CD4-positive, alpha-beta T cell (primary cell): ENCODE measurements at regions of chr2 and their contacts with region 1.

Region 1: GRCh38 chr2:2719015-2719414 is 387.9 kb upstream of the MYT1L start:
- DNase-seq: no peak
- ATAC-seq: no peak
- H3K4me3 ChIP-seq: no peak overlapping the region
- H3K4me3 Mint-ChIP-seq: no peak overlapping the region
- H3K27ac ChIP-seq: no peak overlapping the region
- H3K27ac Mint-ChIP-seq: no peak overlapping the region
- H3K4me1 ChIP-seq: no peaks in the 10 kb centered on the region
- H3K4me1 Mint-ChIP-seq: no peaks in the 10 kb centered on the region
- H3K27me3 ChIP-seq: peaks cover 0 to 4% of the 10 kb centered on the region in 2 experiments
- H3K27me3 Mint-ChIP-seq: peaks cover 6% of the 10 kb centered on the region
- CTCF ChIP-seq: no peak

Region 2: DNA sequence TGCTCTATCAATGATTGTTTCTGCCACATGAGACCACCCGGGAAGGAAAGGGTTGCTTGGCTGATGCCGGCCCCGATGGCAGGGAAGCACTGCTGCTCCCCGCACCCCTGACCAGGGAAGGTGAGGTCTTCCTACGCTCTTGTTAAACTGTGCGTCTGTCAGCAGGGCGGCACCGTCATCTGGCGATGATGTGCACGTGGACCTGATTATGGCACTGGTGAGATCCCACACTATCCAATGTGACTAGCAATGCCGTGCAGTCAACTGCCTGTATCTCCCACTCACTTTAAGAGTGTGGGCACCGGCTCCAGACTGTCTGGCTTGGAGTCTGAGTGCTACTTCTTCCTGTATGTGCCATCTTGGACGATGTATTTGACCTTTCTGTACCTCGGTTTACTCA is 597.1 kb before region 1 on chr2:
- CTCF ChIA-PET with region 1: no interaction called
- POLR2A ChIA-PET with region 1: no interaction called
- intact Hi-C with region 1: loop called (anchors 5 to 10 kb)
- DNase-seq: no peak
- ATAC-seq: no peak
- H3K4me3 ChIP-seq: no peak overlapping the region
- H3K4me3 Mint-ChIP-seq: no peak overlapping the region
- H3K27ac ChIP-seq: no peak overlapping the region
- H3K27ac Mint-ChIP-seq: no peak overlapping the region
- H3K4me1 ChIP-seq: peaks cover 4% of the 10 kb centered on the region
- H3K4me1 Mint-ChIP-seq: no peaks in the 10 kb centered on the region
- H3K27me3 ChIP-seq: peaks cover 0 to 3% of the 10 kb centered on the region in 2 experiments
- H3K27me3 Mint-ChIP-seq: peaks cover 12% of the 10 kb centered on the region
- CTCF ChIP-seq: no peak

Region 3: GRCh38 chr2:2127467-2127866 is 591.5 kb before region 1 on chr2:
- CTCF ChIA-PET with region 1: no interaction called
- POLR2A ChIA-PET with region 1: no interaction called
- intact Hi-C with region 1: loop called (anchors 5 to 10 kb)
- DNase-seq: no peak
- ATAC-seq: no peak
- H3K4me3 ChIP-seq: no peak overlapping the region
- H3K4me3 Mint-ChIP-seq: no peak overlapping the region
- H3K27ac ChIP-seq: no peak overlapping the region
- H3K27ac Mint-ChIP-seq: no peak overlapping the region
- H3K4me1 ChIP-seq: no peaks in the 10 kb centered on the region
- H3K4me1 Mint-ChIP-seq: no peaks in the 10 kb centered on the region
- H3K27me3 ChIP-seq: no peaks in the 10 kb centered on the region
- H3K27me3 Mint-ChIP-seq: peaks cover 17% of the 10 kb centered on the region
- CTCF ChIP-seq: no peak

Region 4: DNA sequence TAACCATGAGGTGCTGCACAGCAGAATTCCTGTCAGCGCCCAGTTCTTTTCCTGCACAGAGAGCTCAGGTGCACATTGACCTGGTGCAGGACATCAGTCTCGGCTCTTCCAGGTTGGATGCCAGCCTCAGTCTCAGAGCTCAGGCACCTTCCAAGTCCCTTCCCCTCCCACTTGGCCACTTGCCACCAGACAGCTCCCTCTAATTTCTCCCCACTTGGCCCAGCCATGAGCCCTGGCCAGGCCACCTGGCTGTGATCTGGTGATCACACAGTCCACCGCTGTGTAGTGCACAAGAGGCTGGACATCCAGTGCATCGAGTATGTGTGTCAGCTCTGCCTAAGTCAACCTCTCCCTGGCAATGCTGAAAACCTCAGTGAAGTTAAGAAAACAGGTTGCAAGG is 51.3 kb before region 1 on chr2:
- CTCF ChIA-PET with region 1: no interaction called
- POLR2A ChIA-PET with region 1: no interaction called
- intact Hi-C with region 1: no loop called
- DNase-seq: no peak
- ATAC-seq: no peak
- H3K4me3 ChIP-seq: no peak overlapping the region
- H3K4me3 Mint-ChIP-seq: no peak overlapping the region
- H3K27ac ChIP-seq: no peak overlapping the region
- H3K27ac Mint-ChIP-seq: no peak overlapping the region
- H3K4me1 ChIP-seq: no peaks in the 10 kb centered on the region
- H3K4me1 Mint-ChIP-seq: no peaks in the 10 kb centered on the region
- H3K27me3 ChIP-seq: no peaks in the 10 kb centered on the region
- H3K27me3 Mint-ChIP-seq: no peaks in the 10 kb centered on the region
- CTCF ChIP-seq: no peak

Region 5: DNA sequence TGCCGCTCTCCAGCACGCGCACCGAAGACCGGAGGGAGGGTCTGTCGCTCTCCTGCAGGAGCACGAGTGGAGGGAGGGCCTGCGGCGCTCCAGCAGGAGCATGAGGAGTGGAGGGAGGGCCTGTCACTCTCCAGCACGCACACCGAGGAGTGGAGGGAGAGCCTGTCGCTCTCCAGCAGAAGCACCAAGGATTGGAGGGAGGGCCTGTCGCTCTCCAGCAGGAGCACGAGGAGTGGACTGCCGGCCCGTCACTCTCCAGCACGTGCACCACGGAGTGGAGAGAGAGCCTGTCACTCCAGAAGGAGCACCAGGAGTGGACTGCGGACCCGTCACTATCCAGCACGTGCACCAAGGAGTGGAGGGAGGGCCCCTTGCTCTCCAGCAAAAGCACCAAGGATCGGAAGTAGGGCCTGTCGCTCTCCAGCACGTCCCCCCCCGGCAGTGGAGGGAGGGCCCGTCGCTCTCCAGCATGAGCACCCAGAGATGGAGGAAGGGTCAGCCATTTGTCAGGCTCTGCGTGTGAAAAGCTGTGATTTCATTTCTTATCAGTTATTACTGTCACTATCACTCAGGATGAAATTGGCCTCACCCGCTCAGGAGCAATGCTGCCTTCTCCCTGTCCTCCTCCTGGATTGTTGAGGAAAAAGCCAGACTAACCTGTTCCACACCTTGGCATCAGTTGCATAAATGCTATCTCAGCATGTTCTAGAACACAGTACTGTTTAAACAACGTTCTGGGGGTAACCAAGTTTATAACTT is 764.4 kb after region 1 on chr2:
- CTCF ChIA-PET with region 1: no interaction called
- POLR2A ChIA-PET with region 1: no interaction called
- intact Hi-C with region 1: no loop called
- DNase-seq: peak in 4 of 14 experiments; percentile 11 to 66 (median 24)
- ATAC-seq: peak; percentile 51
- H3K4me3 ChIP-seq: no peak overlapping the region
- H3K4me3 Mint-ChIP-seq: no peak overlapping the region
- H3K27ac ChIP-seq: no peak overlapping the region
- H3K27ac Mint-ChIP-seq: no peak overlapping the region
- H3K4me1 ChIP-seq: no peaks in the 10 kb centered on the region
- H3K4me1 Mint-ChIP-seq: peaks cover 12% of the 10 kb centered on the region
- H3K27me3 ChIP-seq: no peaks in the 10 kb centered on the region
- H3K27me3 Mint-ChIP-seq: no peaks in the 10 kb centered on the region
- CTCF ChIP-seq: no peak